Psoas muscle (tissue), 8 donors: ENCODE measurements at regions of chr12 and their contacts with region 1.

Region 1: GRCh38 chr12:106357549-106358395 is at the start of gene POLR3B:
- DNase-seq: peak; percentile 96 to 98
- ATAC-seq: peak; percentile 92 to 94 (median 93)
- H3K4me3 ChIP-seq: peak within 1 kb of the TSS; percentile 72
- H3K27ac ChIP-seq: peak within 1 kb of the TSS; percentile 96
- H3K4me1 ChIP-seq: peaks cover 14% of the 10 kb centered on the region
- H3K27me3 ChIP-seq: no peaks in the 10 kb centered on the region
- CTCF ChIP-seq: peak; percentile 87
- total RNA-seq, gene POLR3B: 4.3 to 14.0 (median 8.4) TPM

Region 2: DNA sequence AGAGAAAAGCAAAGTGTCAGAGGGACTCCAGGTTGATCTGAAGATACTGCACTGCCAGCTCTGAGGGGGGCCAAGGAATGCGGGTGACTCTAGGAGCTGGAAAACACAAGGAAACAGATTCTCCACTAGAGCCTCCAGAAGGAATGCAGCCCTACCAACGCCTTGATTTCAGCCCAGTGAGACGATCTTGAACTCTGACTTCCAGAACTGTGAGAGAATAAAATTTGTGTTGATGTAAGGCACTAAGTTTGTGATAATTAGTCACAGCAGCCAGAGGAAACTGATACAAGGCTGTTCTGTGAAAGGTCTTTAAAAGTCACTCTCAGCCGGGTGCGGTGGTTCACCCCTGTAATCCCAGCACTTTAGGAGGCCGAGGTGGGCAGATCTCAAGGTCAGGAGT is 144.1 kb before region 1 on chr12:
- intact Hi-C with region 1: no loop called
- DNase-seq: no peak
- ATAC-seq: peak in 3 of 4 donors; percentile 15 to 60 (median 46)
- H3K4me3 ChIP-seq: no peak overlapping the region
- H3K27ac ChIP-seq: no peak overlapping the region
- H3K4me1 ChIP-seq: no peaks in the 10 kb centered on the region
- H3K27me3 ChIP-seq: peaks cover 0 to 1% (median 0%) of the 10 kb centered on the region in 3 donors
- CTCF ChIP-seq: no peak

Region 3: DNA sequence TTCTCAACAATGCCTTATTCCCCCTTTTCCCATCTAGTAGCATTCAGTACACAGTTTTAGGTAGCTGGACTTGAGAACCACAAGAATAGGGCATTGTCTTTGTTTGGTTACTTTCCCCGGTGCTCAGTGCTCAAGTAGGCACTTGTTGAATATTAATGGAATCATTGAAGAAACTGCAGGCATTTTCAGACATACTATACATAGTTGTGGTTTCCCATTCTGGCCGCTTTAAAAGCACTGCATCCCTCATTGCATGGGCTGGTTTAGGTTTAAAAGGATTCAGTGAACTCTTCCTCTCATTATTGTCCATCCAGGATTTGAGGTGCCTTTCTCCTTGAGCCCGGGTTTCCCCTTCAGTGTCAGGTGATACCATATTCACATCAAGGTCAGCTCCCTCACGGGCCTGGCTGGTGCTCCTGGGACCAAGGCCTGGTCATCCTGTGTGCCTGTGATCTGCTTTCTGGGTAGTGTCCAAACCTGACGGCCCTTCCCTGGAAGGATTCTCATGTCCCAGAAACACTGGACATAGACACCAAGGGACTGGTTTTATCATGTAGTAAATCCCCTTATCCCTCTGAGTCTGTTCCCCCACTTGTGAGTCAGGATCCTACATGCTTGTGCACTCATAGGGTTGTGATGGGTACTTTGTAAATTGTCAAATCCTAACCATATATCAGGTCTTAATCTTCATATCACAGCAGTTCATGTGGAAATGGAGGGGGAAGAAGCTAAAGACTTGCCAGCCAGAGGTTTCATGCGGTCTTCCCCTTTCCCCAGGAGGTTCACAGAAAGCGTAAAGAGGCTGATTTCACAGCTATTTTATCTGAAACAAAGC is 47.9 kb before region 1 on chr12:
- intact Hi-C with region 1: loop called in 1 of 2 experiments (anchors 5 kb)
- DNase-seq: peak; percentile 30 to 54
- ATAC-seq: peak; percentile 39 to 54 (median 42)
- H3K4me3 ChIP-seq: no peak overlapping the region
- H3K27ac ChIP-seq: peak overlapping the region; percentile 97
- H3K4me1 ChIP-seq: peaks cover 74% of the 10 kb centered on the region
- H3K27me3 ChIP-seq: no peaks in the 10 kb centered on the region
- CTCF ChIP-seq: no peak